Right ventricle myocardium superior (tissue), 1 donor: ENCODE measurements at regions of chr18 and their contacts with region 1.

Region 1: DNA sequence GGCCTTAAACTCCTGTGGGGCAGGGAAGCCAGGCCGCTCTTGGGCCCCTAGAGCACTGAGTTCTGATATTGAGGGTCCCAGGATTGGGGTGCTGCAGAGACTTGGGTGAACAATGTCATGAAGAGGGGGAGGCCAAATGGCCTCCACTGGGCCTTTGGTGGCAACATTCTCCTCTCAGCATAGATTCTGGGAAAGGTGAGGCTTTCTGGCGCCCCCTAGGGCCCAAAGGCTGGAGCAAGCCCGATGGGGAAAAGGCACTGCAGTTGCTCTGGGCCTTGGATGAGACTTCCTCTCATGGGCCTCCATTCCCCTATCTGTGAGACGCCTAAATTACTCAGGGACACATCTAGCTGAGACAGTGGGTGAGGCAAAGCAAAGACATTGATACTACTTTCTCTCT is 84.8 kb downstream of the ACAA2 start:
- DNase-seq: no peak
- ATAC-seq: no peak

Region 2: DNA sequence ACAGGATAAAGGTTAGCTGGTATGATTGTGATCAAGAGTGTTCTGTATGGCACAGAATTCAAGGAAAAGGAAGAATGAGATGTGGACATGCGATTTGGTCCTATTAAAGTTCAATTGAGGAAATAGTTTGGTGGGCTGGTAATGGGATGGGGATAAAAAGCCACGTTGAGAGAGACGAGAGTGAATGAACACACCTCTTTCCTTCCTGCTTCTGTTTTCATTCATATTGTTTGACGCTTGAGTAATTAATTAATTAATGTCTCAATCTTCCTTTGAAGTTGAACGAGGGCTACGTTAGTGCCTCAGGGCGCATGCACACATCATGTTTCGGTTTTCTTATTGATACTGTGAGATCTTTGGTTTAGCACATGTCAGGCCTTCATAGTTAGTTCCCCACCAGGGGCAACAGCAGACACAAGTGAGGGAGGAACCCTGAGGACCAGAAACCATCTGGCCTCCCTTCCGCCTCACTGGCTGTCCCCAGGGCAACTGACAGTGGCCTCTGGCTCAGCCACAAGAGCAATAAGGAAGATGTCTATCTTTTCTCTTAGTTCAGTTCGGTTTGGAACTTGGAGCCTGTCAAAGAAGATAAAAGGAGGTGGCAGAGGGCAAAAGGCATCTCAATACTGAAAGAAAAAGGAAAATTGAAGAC is 50.7 kb before region 1 on chr18:
- intact Hi-C with region 1: loop called (anchors 10 kb)
- DNase-seq: no peak
- ATAC-seq: no peak